Activated CD8-positive, alpha-beta memory T cell treated with anti-CD3 and anti-CD28 coated beads, Interleukin-2, amount 10 ng/mL, durations not matched to agents 7 days and 5 days (primary cell): ENCODE measurements at regions of chr6 and their contacts with region 1.

Region 1: GRCh38 chr6:137944793-137945498 is 77.9 kb downstream of the TNFAIP3 start:
- DNase-seq: peak; percentile 47
- ATAC-seq: peak; percentile 73
- H3K4me3 Mint-ChIP-seq: no peak overlapping the region
- H3K27ac Mint-ChIP-seq: no peak overlapping the region
- H3K4me1 Mint-ChIP-seq: peaks cover 45% of the 10 kb centered on the region
- H3K27me3 Mint-ChIP-seq: no peaks in the 10 kb centered on the region

Region 2: GRCh38 chr6:137927777-137928218 is 17.1 kb before region 1 on chr6:
- CTCF ChIA-PET with region 1: interaction called, 32 read pairs
- DNase-seq: peak; percentile 92
- ATAC-seq: peak; percentile 99
- H3K4me3 Mint-ChIP-seq: peak overlapping the region; percentile 55
- H3K27ac Mint-ChIP-seq: peak overlapping the region; percentile 87
- H3K4me1 Mint-ChIP-seq: peaks cover 41% of the 10 kb centered on the region
- H3K27me3 Mint-ChIP-seq: no peaks in the 10 kb centered on the region

Region 3: GRCh38 chr6:137967689-137968454 is 22.9 kb after region 1 on chr6:
- CTCF ChIA-PET with region 1: interaction called, 28 read pairs
- DNase-seq: no peak
- ATAC-seq: no peak
- H3K4me3 Mint-ChIP-seq: no peak overlapping the region
- H3K27ac Mint-ChIP-seq: peak overlapping the region; percentile 54
- H3K4me1 Mint-ChIP-seq: peaks cover 42% of the 10 kb centered on the region
- H3K27me3 Mint-ChIP-seq: no peaks in the 10 kb centered on the region

Region 4: DNA sequence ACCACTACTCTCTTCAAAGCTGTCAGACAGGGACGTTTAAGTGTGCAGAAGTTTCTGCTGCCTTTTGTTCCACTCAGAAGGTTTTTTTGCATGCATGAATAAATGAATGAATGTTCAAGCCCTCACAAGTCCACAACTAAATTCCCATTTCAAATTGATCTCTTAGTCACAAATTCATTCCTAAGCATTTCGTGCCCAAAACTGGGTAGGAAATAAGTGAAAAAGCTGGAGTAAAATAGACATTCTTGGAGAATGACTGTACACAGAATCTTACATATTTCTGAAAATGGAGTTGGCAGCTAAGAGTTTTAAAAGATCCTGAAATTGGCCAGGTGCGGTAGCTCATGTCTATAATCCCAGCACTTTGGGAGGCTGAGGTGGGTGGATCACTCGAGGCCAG is 44.7 kb after region 1 on chr6:
- CTCF ChIA-PET with region 1: no interaction called
- DNase-seq: no peak
- ATAC-seq: no peak
- H3K4me3 Mint-ChIP-seq: no peak overlapping the region
- H3K27ac Mint-ChIP-seq: no peak overlapping the region
- H3K4me1 Mint-ChIP-seq: no peaks in the 10 kb centered on the region
- H3K27me3 Mint-ChIP-seq: peaks cover 19% of the 10 kb centered on the region

Region 5: GRCh38 chr6:138493413-138493812 is 548.5 kb after region 1 on chr6:
- CTCF ChIA-PET with region 1: no interaction called
- DNase-seq: no peak
- ATAC-seq: no peak
- H3K4me3 Mint-ChIP-seq: no peak overlapping the region
- H3K27ac Mint-ChIP-seq: no peak overlapping the region
- H3K4me1 Mint-ChIP-seq: no peaks in the 10 kb centered on the region
- H3K27me3 Mint-ChIP-seq: peaks cover 36% of the 10 kb centered on the region